PC-3 (cell line): ENCODE measurements at regions of chr2 and their contacts with region 1.

Region 1: DNA sequence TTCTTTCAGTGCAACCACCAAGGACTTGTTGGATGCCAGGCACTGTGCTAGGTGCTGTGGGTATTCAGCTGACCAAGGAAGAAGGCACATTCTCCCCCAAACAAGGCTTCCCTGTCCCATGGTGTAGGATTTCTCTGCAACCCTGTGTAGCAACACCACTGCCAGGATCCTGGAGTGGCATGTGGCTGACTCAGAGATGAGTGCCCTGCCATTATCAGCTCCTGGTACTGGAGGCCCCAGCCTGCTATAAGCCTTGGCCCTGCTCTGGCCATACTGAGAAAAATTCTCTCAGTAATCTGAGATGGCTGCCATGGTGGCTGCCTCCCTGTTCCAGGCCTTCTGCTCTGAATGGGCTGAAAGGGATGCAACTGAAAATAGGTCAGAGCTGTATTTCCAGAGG is 4.3 kb downstream of the SMYD5 start:
- DNase-seq: peak; percentile 64
- ATAC-seq: peak; percentile 48
- H3K4me3 ChIP-seq: no peak overlapping the region
- H3K27ac ChIP-seq: no peak overlapping the region
- H3K4me1 ChIP-seq: peaks cover 25% of the 10 kb centered on the region
- H3K27me3 ChIP-seq: no peaks in the 10 kb centered on the region
- CTCF ChIP-seq: no peak

Region 2: DNA sequence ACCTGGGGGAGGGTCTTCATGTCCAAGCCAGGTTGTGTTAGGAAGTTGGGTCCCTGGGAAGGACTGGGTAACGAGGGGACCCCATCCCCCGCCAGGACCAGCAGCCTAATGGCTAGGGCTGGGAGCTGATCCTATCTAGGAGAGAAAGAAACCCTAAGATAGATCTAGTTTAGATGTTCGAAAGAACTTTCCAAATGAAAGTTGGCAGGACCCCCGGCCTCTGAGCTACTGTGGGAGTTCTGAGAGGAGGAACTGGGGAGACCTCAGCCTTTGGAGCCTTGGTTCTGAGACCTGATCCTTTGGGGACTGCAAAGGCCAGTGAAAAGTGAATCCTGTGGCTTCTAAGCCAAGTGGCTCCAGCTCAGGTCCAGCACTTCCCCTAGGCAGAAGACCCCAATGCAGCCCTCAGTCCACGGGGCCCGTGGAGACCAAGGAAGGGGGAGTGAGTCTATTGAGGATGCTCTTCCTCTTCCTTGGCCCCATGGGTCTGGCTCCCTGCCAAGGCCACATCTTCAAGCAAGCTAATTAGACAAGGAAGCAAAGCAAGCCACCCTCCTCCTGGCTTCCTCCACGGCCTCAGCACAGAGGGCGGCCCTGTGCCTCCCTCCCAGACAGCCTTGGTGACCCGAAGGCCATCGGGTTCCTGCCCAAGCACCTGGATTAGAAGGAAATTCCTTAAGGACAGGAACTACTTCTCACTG is 39.3 kb after region 1 on chr2:
- CTCF ChIA-PET with region 1: interaction called, 11 read pairs
- POLR2A ChIA-PET with region 1: no interaction called
- intact Hi-C with region 1: no loop called
- DNase-seq: no peak
- ATAC-seq: no peak
- H3K4me3 ChIP-seq: no peak overlapping the region
- H3K27ac ChIP-seq: no peak overlapping the region
- H3K4me1 ChIP-seq: no peaks in the 10 kb centered on the region
- H3K27me3 ChIP-seq: no peaks in the 10 kb centered on the region
- CTCF ChIP-seq: no peak